Activated CD8-positive, alpha-beta T cell treated with anti-CD3 and anti-CD28 coated beads, Interleukin-2, amount 10 ng/mL, durations not matched to agents 7 days and 5 days (primary cell): ENCODE measurements at regions of chr12 and their contacts with region 1.

Region 1: GRCh38 chr12:9647825-9648700 is 21.4 kb upstream of the CLEC2D start:
- DNase-seq: peak; percentile 97
- ATAC-seq: peak; percentile 83
- H3K4me3 Mint-ChIP-seq: peak overlapping the region; percentile 88
- H3K27ac Mint-ChIP-seq: peak overlapping the region; percentile 100
- H3K4me1 Mint-ChIP-seq: peaks cover 56% of the 10 kb centered on the region
- H3K27me3 Mint-ChIP-seq: peaks cover 2% of the 10 kb centered on the region

Region 2: DNA sequence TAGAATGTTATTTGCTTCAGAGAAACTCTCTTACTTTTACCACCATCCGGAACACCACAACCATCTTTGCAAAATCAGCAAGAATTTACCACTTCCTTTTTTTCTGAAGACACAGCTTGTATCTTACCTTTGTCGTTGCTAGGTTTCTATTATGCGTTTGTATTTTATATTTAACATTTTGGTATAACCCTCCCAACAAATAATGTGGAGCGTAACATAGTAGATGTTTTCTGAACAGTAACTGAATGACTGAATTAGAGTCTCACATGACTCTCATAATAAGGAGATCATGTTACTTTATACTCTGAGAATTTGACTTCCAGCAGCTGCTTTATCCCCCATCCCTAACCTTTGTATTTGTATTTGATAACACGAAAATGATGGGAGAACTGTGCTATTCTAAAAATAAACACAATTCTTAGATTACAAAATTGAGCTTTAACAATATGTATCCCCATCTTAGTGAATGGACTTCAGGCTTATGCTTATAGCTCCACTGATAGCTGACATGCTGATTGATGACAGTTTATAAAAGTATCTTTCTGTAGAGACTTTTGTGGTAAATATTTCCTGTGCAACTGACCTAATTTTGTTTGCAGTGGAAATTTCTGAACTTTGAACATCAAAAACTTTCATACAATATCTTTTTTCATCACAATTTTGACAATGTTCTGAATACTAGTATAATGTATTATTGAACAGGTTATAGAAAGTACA is 32.5 kb before region 1 on chr12:
- CTCF ChIA-PET with region 1: interaction called, 5 read pairs
- POLR2A ChIA-PET with region 1: interaction called, 12 read pairs
- DNase-seq: peak; percentile 44
- ATAC-seq: peak; percentile 92
- H3K4me3 Mint-ChIP-seq: peak overlapping the region; percentile 67
- H3K27ac Mint-ChIP-seq: peak overlapping the region; percentile 87
- H3K4me1 Mint-ChIP-seq: peaks cover 48% of the 10 kb centered on the region
- H3K27me3 Mint-ChIP-seq: no peaks in the 10 kb centered on the region

Region 3: GRCh38 chr12:9702255-9702654 is 54.2 kb after region 1 on chr12:
- CTCF ChIA-PET with region 1: interaction called, 4 read pairs
- POLR2A ChIA-PET with region 1: interaction called, 23 read pairs
- DNase-seq: peak; percentile 82
- ATAC-seq: peak; percentile 73
- H3K4me3 Mint-ChIP-seq: peak overlapping the region; percentile 65
- H3K27ac Mint-ChIP-seq: peak overlapping the region; percentile 88
- H3K4me1 Mint-ChIP-seq: peaks cover 75% of the 10 kb centered on the region
- H3K27me3 Mint-ChIP-seq: no peaks in the 10 kb centered on the region

Region 4: DNA sequence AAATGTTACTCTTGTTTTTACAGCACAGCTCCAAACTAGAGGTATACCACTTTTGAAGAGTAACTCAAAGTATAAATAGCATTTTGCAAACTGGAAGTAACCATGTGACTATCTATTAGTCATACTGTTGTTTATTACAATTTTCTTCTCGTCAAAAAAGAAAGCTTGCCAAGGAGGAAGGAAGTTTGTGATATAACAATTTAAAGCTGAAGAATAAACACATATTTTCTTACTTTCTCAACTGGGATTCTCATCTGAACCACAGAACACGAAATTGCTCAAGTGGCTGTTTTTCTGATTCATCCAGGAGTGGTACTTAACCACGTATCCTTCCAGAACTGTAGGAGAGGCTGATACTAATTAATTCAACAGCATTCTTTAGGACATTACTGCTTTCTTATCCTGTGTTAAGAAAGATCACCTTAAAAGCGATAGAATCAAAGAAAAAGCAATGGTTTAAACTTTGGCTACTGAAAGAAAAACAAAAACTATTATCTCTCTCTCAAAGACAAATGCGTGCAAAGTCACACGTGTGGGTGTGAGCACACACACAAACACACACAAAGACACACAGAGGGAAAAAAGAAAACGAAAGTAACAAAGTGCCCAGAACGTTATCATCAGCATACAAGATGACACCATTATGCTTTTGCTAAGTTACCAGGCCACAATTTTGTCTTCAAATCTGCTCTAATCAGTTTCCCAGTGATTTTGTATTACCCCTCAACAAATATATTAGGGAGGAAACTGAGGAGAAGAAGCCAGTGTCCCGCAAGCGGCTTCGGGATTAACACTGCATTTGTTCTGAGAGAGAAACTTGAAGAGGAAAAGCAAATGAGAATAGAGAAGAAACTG is 221.5 kb after region 1 on chr12 and contains the start of gene CLEC2B:
- CTCF ChIA-PET with region 1: no interaction called
- POLR2A ChIA-PET with region 1: interaction called, 43 read pairs
- DNase-seq: peak; percentile 58
- ATAC-seq: peak; percentile 55
- H3K4me3 Mint-ChIP-seq: peak within 1 kb of the TSS; percentile 79
- H3K27ac Mint-ChIP-seq: peak within 1 kb of the TSS; percentile 91
- H3K4me1 Mint-ChIP-seq: peaks cover 22% of the 10 kb centered on the region
- H3K27me3 Mint-ChIP-seq: no peaks in the 10 kb centered on the region
- total RNA-seq, gene CLEC2B: 55.2 to 58.8 TPM